HEK293T (cell line): ENCODE measurements at regions of chr19 and their contacts with region 1.

Region 1: DNA sequence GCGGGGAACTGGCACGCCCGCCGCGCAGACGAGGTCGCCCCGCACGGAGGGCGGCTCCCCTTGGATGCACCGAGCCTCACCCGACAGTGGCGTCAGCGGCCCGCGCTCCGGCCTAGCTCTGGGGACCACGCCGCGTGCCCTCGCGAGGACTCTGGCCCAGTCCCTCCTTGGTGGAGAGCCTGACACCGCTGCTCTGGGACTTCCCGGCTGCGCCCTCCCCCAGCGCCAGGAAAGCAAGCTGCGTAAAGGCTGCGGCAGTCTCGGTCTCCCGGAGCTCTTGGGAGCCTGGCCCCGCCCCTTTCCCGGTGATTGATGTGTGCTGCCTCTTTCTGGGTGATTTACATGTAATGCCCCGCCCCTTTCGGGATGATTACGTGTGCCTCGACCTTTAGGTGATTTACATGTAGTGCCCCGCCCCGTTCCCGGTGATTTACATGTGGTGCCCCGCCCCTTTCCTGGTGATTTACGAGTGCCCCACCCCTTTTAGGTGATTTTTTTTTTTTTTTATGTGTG is at the start of gene LENG9:
- DNase-seq: peak; percentile 91

Region 2: GRCh38 chr19:54430306-54431254 is 33.0 kb before region 1 on chr19:
- CTCF ChIA-PET with region 1: no interaction called
- POLR2A ChIA-PET with region 1: interaction called, 10 read pairs
- DNase-seq: peak; percentile 86

Region 3: DNA sequence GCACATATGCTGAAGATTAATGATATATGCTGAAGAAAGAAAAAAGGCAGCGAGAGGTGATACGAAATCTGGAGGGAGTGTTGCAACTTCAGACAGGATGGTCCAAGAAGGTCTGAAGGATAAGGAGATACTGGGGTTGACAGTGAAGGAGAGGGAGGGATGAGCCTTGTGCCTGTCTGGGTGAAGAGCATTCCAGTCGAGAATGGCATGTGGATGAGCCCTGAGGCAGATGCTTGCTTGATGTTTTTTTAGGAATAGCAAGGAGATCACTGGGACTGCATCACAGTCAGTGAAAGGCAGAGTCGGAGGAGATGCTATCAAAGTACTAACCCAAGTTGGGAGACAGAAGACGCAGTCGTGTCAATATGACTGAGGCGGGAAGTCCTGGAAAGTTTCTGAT is 25.8 kb after region 1 on chr19:
- CTCF ChIA-PET with region 1: no interaction called
- POLR2A ChIA-PET with region 1: no interaction called
- DNase-seq: no peak